ENCODE measurements at regions of chr1 and their contacts with region 1.

Region 1: DNA sequence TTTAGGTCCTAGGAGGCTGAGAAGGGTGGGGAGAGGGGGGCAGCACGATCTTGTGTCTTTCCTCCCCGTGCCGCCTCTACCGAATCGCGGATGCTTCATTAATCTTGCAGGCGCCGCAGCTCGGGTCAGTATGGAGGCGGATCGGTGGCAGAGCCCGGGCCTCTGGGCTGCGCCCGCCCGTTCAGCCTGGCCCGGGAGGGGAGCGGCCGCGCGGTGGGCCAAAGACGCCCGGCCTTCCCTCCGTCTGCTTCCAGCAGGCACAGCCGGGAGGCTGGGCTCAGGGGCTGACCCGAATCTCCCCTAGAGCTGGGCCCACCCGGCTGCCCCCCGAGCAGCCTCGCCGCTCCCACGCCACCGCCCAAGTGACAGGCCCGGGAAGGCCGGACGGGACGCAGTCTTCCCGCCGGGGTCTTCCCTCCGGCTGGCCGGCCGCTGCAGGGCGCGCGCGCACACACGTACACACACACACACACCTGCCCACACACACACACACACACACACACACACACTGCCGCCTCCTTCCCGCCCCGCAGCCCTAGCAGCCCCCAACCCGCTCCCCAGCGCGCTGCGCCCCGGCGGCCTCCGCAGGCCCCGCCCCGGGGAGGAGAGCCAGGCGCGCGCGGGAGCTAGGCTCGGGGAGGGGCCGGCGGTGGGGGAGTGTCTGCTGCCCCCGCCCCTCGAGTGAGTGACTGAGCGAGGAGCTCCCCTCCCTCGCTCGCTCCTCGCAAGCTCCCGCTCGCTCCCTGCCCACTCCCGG is at the start of gene C1orf21:
- DNase-seq: peak; percentile 93
- H3K4me3 Mint-ChIP-seq: peak within 1 kb of the TSS; percentile 90
- H3K27ac Mint-ChIP-seq: peak within 1 kb of the TSS; percentile 79
- H3K4me1 Mint-ChIP-seq: peaks cover 27% of the 10 kb centered on the region
- H3K27me3 Mint-ChIP-seq: no peaks in the 10 kb centered on the region
- CTCF ChIP-seq: no peak
- total RNA-seq, gene C1orf21: 23.2 and 25.3 TPM in 2 replicates

Region 2: DNA sequence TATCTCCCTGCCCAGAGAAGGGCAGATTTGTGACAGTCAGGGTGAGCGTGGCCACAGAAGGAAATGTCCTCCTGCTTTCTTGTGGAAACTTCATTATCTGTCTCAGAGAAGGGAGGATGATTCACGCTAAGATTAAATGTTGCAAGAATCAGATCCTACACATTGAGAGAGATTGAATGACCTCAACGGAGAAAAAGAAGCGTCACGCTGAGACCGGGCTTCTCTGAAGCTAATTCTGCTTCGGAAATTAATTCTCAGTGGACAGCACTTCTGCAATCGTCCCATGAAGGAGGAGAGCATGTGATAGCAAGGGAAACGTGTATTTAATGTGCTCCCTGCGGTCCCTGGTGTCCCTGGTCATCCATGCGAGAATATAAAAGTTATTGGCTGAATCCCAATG is 19.5 kb before region 1 on chr1:
- CTCF ChIA-PET with region 1: interaction called, 12 read pairs
- POLR2A ChIA-PET with region 1: interaction called, 93 read pairs
- intact Hi-C with region 1: no loop called
- DNase-seq: no peak
- H3K4me3 Mint-ChIP-seq: no peak overlapping the region
- H3K27ac Mint-ChIP-seq: no peak overlapping the region
- H3K4me1 Mint-ChIP-seq: peaks cover 33% of the 10 kb centered on the region
- H3K27me3 Mint-ChIP-seq: no peaks in the 10 kb centered on the region
- CTCF ChIP-seq: no peak

Region 3: DNA sequence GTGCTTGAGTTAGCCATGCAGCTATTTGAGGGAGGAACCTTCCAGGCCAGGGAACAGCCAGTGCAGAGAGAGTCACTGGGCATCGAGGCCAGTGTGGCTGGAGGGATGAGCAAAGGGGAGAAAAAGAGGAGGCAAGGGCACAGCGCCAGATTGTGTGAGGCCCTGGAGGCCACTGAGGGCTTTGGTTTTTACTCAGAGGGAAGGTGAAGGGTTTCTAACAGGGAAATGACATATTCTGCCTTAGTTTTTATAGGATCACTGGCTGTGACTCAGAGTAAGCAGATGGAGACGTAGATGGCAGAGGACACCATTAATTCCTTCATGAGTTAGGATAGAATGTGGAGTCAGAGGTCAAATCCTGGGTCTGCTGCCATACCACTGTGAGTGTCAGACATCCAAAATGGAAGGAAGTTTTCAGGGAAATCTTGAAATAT is 33.3 kb after region 1 on chr1:
- CTCF ChIA-PET with region 1: interaction called, 6 read pairs
- POLR2A ChIA-PET with region 1: interaction called, 17 read pairs
- intact Hi-C with region 1: no loop called
- DNase-seq: peak; percentile 28
- H3K4me3 Mint-ChIP-seq: no peak overlapping the region
- H3K27ac Mint-ChIP-seq: no peak overlapping the region
- H3K4me1 Mint-ChIP-seq: peaks cover 45% of the 10 kb centered on the region
- H3K27me3 Mint-ChIP-seq: no peaks in the 10 kb centered on the region
- CTCF ChIP-seq: no peak

Region 4: GRCh38 chr1:184555665-184556641 is 169.5 kb after region 1 on chr1:
- CTCF ChIA-PET with region 1: interaction called, 4 read pairs
- POLR2A ChIA-PET with region 1: interaction called, 16 read pairs
- intact Hi-C with region 1: loop called (anchors 2 kb)
- DNase-seq: peak; percentile 52
- H3K4me3 Mint-ChIP-seq: no peak overlapping the region
- H3K27ac Mint-ChIP-seq: peak overlapping the region; percentile 91
- H3K4me1 Mint-ChIP-seq: peaks cover 41% of the 10 kb centered on the region
- H3K27me3 Mint-ChIP-seq: no peaks in the 10 kb centered on the region
- CTCF ChIP-seq: no peak

Region 5: GRCh38 chr1:184622136-184622823 is 235.8 kb after region 1 on chr1:
- CTCF ChIA-PET with region 1: interaction called, 6 read pairs
- POLR2A ChIA-PET with region 1: interaction called, 67 read pairs
- intact Hi-C with region 1: no loop called
- DNase-seq: peak; percentile 98
- H3K4me3 Mint-ChIP-seq: peak overlapping the region; percentile 42
- H3K27ac Mint-ChIP-seq: peak overlapping the region; percentile 74
- H3K4me1 Mint-ChIP-seq: peaks cover 64% of the 10 kb centered on the region
- H3K27me3 Mint-ChIP-seq: no peaks in the 10 kb centered on the region
- CTCF ChIP-seq: no peak

Region 6: GRCh38 chr1:184691719-184692324 is 305.3 kb after region 1 on chr1:
- CTCF ChIA-PET with region 1: interaction called, 12 read pairs
- POLR2A ChIA-PET with region 1: interaction called, 11 read pairs
- intact Hi-C with region 1: no loop called
- DNase-seq: peak; percentile 72
- H3K4me3 Mint-ChIP-seq: no peak overlapping the region
- H3K27ac Mint-ChIP-seq: no peak overlapping the region
- H3K4me1 Mint-ChIP-seq: no peaks in the 10 kb centered on the region
- H3K27me3 Mint-ChIP-seq: no peaks in the 10 kb centered on the region
- CTCF ChIP-seq: peak; percentile 80